Heart left ventricle (tissue), 16 donors: ENCODE measurements at regions of chr7 and their contacts with region 1.

Region 1: GRCh38 chr7:96188174-96188581 is 133.7 kb downstream of the SLC25A13 start:
- DNase-seq: no peak
- ATAC-seq: peak in 2 of 4 donors; percentile 10 to 29
- H3K4me3 ChIP-seq: peak overlapping the region in 3 of 12 donors; percentile 3 to 37 (median 27)
- H3K27ac ChIP-seq: peak overlapping the region in 1 of 12 donors; percentile 27
- H3K4me1 ChIP-seq: peaks cover 0 to 20% (median 0%) of the 10 kb centered on the region in 12 donors
- H3K27me3 ChIP-seq: no peaks in the 10 kb centered on the region
- CTCF ChIP-seq: no peak
- POLR2A ChIP-seq: no peak

Region 2: GRCh38 chr7:95871078-95871782 is 316.9 kb before region 1 on chr7:
- intact Hi-C with region 1: no loop called
- DNase-seq: peak in 1 of 5 donors; percentile 20
- ATAC-seq: peak in 3 of 4 donors; percentile 51 to 71 (median 69)
- H3K4me3 ChIP-seq: no peak overlapping the region
- H3K27ac ChIP-seq: no peak overlapping the region
- H3K4me1 ChIP-seq: peaks cover 0 to 14% (median 7%) of the 10 kb centered on the region in 12 donors
- H3K27me3 ChIP-seq: no peaks in the 10 kb centered on the region
- CTCF ChIP-seq: peak; percentile 36 to 73 (median 62)
- POLR2A ChIP-seq: no peak

Region 3: DNA sequence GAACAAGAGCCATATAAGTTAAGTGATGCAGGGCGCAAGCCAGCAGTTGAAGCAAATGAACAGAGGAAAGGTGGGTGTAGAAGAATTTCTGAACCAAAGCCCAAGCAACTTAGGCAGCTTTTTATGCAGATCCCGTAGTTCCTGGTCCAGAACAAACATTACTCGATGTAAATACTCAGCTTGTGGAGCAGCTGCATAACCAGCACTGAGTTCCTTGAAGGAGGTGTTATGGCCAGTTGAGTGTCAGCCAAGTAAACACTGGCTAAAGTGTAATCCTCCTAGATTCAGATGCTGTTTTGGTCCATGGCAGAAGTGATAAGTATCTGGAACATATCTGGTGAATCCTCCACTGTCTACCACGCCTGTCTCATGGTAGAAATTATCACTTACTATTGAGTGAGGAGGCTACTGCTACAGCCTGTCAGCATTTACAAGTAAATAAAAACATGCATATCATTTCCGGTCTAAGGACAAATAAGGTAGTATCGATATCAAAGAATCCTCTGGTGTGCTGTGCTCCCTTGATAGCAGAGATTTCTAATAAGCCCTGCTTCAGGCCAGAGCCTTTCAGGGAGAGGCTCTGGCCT is 201.9 kb before region 1 on chr7:
- intact Hi-C with region 1: no loop called
- DNase-seq: no peak
- ATAC-seq: no peak
- H3K4me3 ChIP-seq: no peak overlapping the region
- H3K27ac ChIP-seq: no peak overlapping the region
- H3K4me1 ChIP-seq: peaks cover 0 to 3% (median 0%) of the 10 kb centered on the region in 12 donors
- H3K27me3 ChIP-seq: no peaks in the 10 kb centered on the region
- CTCF ChIP-seq: no peak
- POLR2A ChIP-seq: no peak

Region 4: GRCh38 chr7:96151889-96152288 is 36.3 kb before region 1 on chr7:
- intact Hi-C with region 1: no loop called
- DNase-seq: peak in 1 of 5 donors; percentile 24
- ATAC-seq: peak in 1 of 4 donors; percentile 20
- H3K4me3 ChIP-seq: no peak overlapping the region
- H3K27ac ChIP-seq: no peak overlapping the region
- H3K4me1 ChIP-seq: no peaks in the 10 kb centered on the region
- H3K27me3 ChIP-seq: no peaks in the 10 kb centered on the region
- CTCF ChIP-seq: no peak
- POLR2A ChIP-seq: no peak

Region 5: DNA sequence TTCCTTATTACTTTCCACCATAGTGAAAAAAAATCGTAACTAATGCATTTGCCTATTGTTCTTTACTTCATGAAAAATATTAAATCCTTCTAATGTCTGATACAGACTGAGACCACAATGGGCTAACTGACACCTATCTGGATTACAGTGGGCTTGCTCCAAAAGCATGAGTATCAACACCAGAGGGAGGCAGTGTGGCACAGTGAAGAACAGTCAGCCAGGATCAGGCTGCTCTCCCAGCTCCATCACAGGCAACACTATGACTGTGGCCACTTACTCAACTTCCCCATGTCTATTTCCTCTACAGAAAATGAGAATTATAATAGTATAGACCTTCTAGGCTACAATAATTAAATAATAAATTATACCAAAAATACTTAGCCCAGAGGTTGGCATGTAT is 36.5 kb after region 1 on chr7:
- intact Hi-C with region 1: loop called in 1 of 10 experiments (anchors 5 kb)
- DNase-seq: no peak
- ATAC-seq: no peak
- H3K4me3 ChIP-seq: no peak overlapping the region
- H3K27ac ChIP-seq: no peak overlapping the region
- H3K4me1 ChIP-seq: peaks cover 0 to 7% (median 2%) of the 10 kb centered on the region in 12 donors
- H3K27me3 ChIP-seq: no peaks in the 10 kb centered on the region
- CTCF ChIP-seq: peak in 4 of 12 donors; percentile 9 to 29 (median 22)
- POLR2A ChIP-seq: no peak